MCF 10A (cell line): ENCODE measurements at regions of chr17 and their contacts with region 1.

Region 1: GRCh38 chr17:64117981-64118979 is 11.7 kb downstream of the ERN1 start:
- DNase-seq: peak; percentile 76
- H3K4me3 Mint-ChIP-seq: no peak overlapping the region
- H3K27ac Mint-ChIP-seq: no peak overlapping the region
- H3K4me1 Mint-ChIP-seq: peaks cover 44% of the 10 kb centered on the region
- H3K27me3 Mint-ChIP-seq: no peaks in the 10 kb centered on the region
- CTCF ChIP-seq: no peak

Region 2: DNA sequence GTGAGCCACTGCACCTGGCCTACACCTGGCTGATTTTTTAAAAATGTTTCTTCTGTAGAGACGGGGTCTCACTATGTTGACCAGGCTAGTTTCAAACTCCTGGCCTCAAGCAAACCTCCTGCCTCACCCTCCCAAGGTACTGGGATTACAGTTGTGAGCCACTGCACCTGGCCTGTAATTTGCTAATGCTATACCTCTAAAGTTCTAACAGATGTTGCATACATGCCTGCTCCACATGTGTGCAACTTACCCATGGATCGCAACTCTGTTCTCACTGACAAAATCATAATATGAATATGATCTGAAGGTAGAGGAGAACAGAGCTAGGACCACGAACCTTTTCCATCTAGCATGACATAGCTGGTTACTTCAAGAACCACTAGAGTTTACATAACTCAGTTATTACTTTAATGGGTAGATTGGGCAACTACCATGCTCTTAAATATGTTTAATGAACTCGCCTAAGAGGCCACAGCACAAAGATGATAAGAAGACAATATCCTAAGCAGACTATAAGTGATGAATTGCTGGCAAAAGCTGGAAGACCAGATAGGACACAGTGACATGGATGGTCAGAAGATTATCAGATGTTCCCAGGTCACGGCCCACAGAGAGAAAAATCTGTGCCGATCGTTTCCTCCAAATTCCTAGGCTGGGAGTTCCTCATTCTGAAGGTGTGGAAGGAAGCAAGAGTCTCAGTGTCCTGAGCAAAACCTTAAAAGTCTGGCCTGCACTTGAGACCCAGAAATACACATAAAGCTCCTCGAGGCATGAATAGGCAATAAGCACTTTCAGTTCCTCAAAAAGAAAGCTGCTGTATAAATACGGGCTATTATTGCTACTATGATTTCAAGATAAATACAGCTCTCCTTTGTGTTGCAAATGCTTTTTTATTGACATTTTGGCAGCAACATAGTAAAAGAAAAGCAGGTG is 44.2 kb before region 1 on chr17:
- CTCF ChIA-PET with region 1: interaction called, 4 read pairs
- POLR2A ChIA-PET with region 1: interaction called, 72 read pairs
- intact Hi-C with region 1: no loop called
- DNase-seq: no peak
- H3K4me3 Mint-ChIP-seq: no peak overlapping the region
- H3K27ac Mint-ChIP-seq: peak overlapping the region; percentile 79
- H3K4me1 Mint-ChIP-seq: peaks cover 20% of the 10 kb centered on the region
- H3K27me3 Mint-ChIP-seq: no peaks in the 10 kb centered on the region
- CTCF ChIP-seq: no peak

Region 3: DNA sequence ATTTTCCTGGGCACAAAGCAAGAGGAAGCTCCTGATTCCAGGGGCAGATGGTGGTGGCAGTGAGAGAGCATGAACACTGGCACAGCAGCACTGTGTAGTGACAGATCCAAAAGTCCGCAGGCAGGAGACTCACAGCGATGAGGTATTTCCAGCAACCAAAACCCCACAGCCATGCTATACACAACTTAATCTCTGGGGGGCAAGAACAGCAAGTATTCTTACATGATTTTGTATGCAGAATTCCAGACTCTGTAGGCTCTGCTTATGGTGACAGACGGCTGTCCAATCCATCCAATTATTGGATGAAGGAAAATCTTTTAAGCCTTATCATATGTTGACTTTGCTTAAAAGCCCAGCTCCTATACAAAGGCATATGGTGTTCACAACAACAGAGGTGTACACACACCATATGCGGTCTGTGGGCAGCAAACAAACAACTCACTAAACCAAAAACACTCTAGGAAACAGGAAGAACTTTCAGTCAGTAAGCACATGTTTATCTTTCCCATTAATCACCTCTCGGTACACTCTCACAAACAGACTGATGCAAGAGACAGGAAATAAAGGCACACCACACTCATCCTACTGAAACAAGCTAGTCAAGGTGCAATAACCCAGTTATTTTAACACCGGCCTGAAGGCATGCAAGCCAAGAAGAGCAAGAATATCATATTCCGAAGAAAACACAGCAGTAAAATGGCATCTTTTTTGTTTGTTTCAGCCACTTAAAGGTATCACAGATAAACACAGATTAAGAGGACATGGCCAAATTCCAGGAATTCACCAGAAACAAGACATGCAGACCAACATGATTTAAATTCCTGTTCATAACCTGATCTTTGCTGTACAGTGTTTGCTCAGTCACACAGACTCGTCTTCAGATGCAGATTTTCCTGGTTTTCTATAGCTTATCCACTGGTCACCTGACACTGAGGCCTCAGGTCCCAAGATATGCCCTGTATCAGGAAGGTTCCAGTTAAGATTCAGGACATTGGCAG is 36.2 kb before region 1 on chr17:
- CTCF ChIA-PET with region 1: interaction called, 3 read pairs
- POLR2A ChIA-PET with region 1: interaction called, 72 read pairs
- intact Hi-C with region 1: loop called (anchors 1 kb)
- DNase-seq: peak; percentile 87
- H3K4me3 Mint-ChIP-seq: peak overlapping the region; percentile 19
- H3K27ac Mint-ChIP-seq: no peak overlapping the region
- H3K4me1 Mint-ChIP-seq: peaks cover 19% of the 10 kb centered on the region
- H3K27me3 Mint-ChIP-seq: no peaks in the 10 kb centered on the region
- CTCF ChIP-seq: no peak

Region 4: GRCh38 chr17:64091116-64091515 is 27.2 kb before region 1 on chr17:
- CTCF ChIA-PET with region 1: interaction called, 8 read pairs
- POLR2A ChIA-PET with region 1: interaction called, 111 read pairs
- intact Hi-C with region 1: no loop called
- DNase-seq: no peak
- H3K4me3 Mint-ChIP-seq: no peak overlapping the region
- H3K27ac Mint-ChIP-seq: peak overlapping the region; percentile 85
- H3K4me1 Mint-ChIP-seq: peaks cover 26% of the 10 kb centered on the region
- H3K27me3 Mint-ChIP-seq: no peaks in the 10 kb centered on the region
- CTCF ChIP-seq: no peak

Region 5: GRCh38 chr17:64103391-64104364 is 14.6 kb before region 1 on chr17:
- CTCF ChIA-PET with region 1: interaction called, 3 read pairs
- POLR2A ChIA-PET with region 1: interaction called, 111 read pairs
- intact Hi-C with region 1: no loop called
- DNase-seq: peak; percentile 73
- H3K4me3 Mint-ChIP-seq: no peak overlapping the region
- H3K27ac Mint-ChIP-seq: peak overlapping the region; percentile 49
- H3K4me1 Mint-ChIP-seq: peaks cover 12% of the 10 kb centered on the region
- H3K27me3 Mint-ChIP-seq: no peaks in the 10 kb centered on the region
- CTCF ChIP-seq: no peak